GM10248 (cell line): ENCODE measurements at regions of chr19 and their contacts with region 1.

Region 1: DNA sequence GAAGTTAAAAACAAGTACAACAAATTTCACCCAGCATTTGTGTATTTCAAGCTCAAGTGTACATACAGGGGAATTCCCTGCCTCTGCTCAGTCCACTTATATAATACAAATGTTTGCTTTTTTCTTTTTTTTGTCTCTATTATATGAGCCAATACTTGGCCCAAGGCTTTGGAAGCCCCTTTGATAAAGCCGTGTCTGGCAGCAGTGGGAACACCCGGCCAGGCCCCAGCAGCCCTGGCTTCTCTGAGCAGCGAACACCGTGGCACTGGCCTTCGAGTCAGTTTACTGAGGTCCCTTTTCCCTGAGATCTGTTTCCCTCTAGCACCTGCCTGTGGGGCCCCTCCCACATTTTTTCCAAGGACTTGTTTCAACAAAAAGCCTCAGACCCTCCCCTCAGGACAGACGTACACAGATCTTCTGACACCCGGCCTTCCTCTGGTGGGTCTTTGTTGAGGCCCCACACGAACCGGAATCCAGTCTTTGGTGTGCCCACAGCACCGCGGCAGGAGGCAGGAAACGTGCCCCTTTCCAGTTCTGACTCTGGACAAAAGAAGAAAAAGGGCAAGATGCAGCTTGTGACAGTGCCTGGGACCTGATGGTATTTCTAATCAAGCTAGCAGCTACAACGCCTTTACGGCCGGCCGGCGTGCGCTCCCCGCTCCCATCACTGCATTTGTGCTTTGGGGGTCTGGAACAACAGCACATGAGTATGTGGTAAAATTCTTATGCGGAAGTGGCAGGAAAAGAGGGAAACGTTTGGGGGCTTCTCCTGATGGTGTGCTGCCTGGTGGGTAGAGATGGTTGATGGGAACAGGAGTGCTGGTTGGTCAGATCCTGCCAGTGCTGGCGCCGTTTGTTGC is 13.8 kb downstream of the SIPA1L3 start:
- DNase-seq: no peak
- CTCF ChIP-seq: no peak

Region 2: DNA sequence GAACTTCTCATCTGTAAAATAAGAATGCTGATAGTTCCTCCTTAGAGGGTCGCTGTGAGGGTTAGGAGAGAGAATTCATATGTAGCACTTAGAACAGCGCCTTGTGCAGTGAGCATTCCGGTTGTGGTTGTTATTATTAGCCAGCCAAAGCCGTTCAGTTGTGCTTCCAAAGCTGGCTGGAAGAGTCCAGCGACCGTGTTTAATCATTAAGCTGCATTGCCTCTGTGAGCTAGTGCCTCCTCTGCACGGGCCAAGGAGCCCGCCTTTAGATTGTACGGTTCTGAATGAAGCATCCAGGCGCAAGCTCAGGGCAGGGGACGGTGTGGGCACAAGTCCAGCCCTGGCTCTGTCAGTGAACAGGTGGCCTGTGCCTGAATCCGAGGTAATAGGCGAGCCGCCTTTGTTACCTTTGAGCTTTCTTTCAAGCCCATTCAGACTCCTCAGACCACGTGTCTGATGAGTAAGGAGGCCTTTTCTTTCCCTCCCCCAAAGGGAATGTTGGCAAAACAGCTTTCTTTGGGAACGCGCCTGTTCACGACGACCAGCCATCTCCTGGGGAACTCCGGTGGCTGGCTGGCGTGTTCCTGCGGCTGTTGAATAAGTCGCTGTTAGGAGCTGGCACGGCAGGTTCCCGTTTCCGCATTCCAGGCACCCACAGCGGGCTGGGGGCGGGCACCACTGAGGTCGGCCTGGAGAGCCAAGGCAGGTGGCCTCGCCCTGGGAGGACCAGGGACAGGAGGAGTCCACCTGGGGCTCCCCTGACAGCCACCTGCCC is 11.2 kb after region 1 on chr19:
- CTCF ChIA-PET with region 1: interaction called, 30 read pairs
- POLR2A ChIA-PET with region 1: no interaction called
- DNase-seq: peak; percentile 62
- CTCF ChIP-seq: no peak